Mammary epithelial cell (primary cell): ENCODE measurements at regions of chr21 and their contacts with region 1.

Region 1: DNA sequence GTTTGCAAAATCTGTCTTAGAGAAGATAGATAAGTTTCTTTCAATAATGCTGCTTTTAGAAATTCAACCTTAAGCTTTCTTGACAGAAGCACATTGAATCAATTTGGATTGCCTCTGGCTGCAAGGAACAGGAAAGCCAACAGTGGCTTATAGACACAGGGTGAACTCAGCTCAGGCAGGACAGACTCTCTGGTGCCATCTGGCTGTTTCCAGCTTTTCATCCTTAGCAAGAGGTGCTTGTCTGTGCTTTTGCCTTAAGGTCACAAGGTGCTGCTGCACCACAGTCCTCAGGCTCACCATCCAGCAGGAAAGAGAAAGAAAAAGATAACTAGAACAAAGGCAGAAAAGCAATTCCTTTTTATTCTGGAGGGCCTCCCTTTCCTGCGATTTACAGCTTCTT is 93.7 kb upstream of the ETS2 start:
- DNase-seq: peak; percentile 44
- H3K4me3 ChIP-seq: no peak overlapping the region
- H3K27ac ChIP-seq: no peak overlapping the region
- H3K4me1 ChIP-seq: no peaks in the 10 kb centered on the region
- H3K27me3 ChIP-seq: peaks cover 4% of the 10 kb centered on the region
- CTCF ChIP-seq: peak; percentile 58 to 79

Region 2: DNA sequence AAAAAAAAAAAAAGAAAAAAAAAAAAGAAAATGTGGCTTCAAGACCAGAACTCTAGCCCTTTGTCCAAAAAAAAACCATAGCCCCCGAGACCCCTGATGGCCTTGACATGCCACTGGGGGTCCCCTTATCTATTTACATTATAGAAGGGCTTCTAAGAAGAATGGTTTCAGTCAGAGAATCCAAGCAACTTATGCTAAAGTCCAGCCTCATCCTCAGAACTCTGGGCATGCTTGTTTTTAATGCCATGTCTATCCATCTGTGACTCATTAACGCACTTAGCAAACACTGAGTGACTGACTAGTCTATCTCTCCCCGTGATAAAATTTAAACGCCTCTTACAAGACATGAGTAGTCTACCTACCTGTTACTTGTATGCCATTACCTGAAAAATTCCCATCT is 243.1 kb before region 1 on chr21:
- CTCF ChIA-PET with region 1: no interaction called
- dilution Hi-C with region 1: no loop called
- in situ Hi-C with region 1: no loop called
- intact Hi-C with region 1: loop called (anchors 1 kb)
- DNase-seq: peak; percentile 32
- H3K4me3 ChIP-seq: no peak overlapping the region
- H3K27ac ChIP-seq: no peak overlapping the region
- H3K4me1 ChIP-seq: peaks cover 17% of the 10 kb centered on the region
- H3K27me3 ChIP-seq: no peaks in the 10 kb centered on the region
- CTCF ChIP-seq: no peak

Region 3: DNA sequence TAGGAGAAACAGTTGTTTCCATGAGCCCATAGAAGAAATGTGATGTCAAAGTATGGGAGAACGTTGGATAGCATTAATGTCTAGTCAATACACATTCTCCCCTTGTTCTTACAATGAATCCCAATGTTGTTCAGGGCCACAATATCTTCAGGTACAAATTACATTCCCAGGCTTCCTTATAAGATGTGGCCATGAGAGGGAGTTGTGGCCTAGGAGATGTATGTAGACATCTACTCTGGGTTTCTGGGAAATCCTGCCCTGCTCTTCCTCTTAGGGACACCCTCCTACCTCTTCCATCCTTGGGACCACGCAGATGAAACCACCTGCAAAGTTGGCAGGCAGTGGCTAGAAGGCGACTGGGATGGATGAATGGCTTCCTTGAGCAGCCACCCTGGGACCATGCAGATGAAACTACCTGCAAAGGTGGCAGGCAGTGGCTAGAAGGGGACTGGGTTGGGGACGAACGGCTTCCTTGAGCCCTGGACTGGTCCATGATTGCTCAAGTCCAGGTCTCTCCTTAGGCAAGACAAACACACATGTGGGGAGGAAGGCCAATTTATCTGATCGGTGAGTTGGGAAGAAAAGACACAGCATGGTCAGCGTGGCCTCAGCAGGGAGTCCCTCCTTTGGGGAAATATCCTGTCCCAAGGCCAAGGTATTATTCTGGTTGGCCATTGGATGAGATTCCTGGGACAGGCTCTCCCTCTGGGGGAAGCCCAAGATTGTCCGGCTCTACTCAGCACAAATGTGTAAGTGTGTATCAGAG is 97.7 kb before region 1 on chr21:
- CTCF ChIA-PET with region 1: no interaction called
- dilution Hi-C with region 1: no loop called
- in situ Hi-C with region 1: no loop called
- intact Hi-C with region 1: loop called (anchors 5 kb)
- DNase-seq: no peak
- H3K4me3 ChIP-seq: no peak overlapping the region
- H3K27ac ChIP-seq: no peak overlapping the region
- H3K4me1 ChIP-seq: no peaks in the 10 kb centered on the region
- H3K27me3 ChIP-seq: no peaks in the 10 kb centered on the region
- CTCF ChIP-seq: peak in 1 of 2 donors; percentile 17

Region 4: DNA sequence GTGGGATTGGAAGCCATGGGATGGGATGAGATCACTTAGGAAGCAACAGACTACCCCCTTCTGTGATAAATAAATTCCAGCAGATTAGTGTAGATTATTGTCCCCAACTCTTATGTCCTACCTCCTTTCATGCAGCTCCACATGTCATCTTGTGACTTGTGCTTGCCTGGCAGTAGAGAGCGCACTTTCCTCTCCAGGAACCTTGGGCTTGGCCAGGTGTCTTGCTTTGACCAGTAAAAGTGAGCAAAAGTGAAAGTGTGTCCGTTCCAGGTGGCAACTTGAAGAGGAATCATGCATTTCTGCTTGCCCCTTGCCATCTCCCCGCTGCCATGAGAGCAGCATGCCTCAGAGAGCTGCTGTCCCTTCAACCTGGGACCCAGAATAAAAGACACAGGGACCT is 90.9 kb before region 1 on chr21:
- CTCF ChIA-PET with region 1: interaction called, 19 read pairs
- dilution Hi-C with region 1: no loop called
- in situ Hi-C with region 1: no loop called
- intact Hi-C with region 1: no loop called
- DNase-seq: no peak
- H3K4me3 ChIP-seq: no peak overlapping the region
- H3K27ac ChIP-seq: no peak overlapping the region
- H3K4me1 ChIP-seq: peaks cover 4% of the 10 kb centered on the region
- H3K27me3 ChIP-seq: no peaks in the 10 kb centered on the region
- CTCF ChIP-seq: peak in 1 of 2 donors; percentile 20

Region 5: DNA sequence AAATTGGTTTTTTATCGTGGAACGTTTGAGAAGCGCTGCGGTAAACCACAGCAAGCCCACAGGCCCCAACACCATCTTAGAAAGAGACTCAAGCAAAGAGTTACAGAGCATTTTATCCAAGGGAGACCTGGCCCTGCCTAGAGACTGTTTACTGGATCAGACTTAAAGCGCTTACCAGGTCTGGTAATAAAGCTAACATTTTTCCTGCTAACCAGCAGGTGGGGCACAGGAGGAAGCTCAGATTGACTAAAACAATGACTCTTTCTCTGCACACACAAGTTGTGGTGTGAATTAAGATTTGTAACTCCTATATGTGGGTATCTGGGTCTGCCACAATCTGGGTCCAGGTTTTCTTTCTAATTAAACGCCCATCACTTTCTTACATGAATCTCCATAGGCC is 42.9 kb before region 1 on chr21:
- CTCF ChIA-PET with region 1: interaction called, 10 read pairs
- dilution Hi-C with region 1: no loop called
- in situ Hi-C with region 1: no loop called
- intact Hi-C with region 1: loop called (anchors 1 kb)
- DNase-seq: peak; percentile 20
- H3K4me3 ChIP-seq: no peak overlapping the region
- H3K27ac ChIP-seq: no peak overlapping the region
- H3K4me1 ChIP-seq: no peaks in the 10 kb centered on the region
- H3K27me3 ChIP-seq: no peaks in the 10 kb centered on the region
- CTCF ChIP-seq: peak; percentile 54 to 71

Region 6: DNA sequence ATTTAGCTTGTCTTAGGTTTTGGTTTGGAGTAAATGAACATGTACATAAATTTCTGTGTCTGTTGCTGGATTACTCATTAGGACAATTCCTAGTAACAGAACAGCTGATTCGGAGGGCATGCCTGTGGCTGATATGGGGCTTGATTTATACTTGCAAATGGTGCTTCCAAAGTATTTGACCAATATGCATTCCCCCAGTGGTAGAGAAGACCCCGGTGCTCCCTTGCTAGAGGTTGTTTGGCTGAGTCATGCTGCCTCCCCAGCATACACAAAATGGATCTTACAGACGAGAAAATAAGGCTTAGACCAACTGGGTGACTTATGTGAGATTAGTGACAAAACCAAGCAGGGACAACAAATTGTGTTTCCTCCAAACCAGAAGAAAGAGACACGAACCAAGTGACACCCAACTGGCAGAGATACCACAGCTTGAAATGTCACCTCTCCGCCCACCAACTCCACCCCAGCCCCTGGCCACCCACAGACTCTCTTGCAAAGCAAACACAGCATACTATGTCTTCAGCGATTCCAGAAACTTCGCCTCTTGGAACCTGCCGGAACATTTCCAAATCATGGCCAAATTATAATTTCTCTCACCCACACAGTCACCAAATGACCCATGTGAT is 17.8 kb after region 1 on chr21:
- CTCF ChIA-PET with region 1: no interaction called
- dilution Hi-C with region 1: no loop called
- in situ Hi-C with region 1: no loop called
- intact Hi-C with region 1: no loop called
- DNase-seq: no peak
- H3K4me3 ChIP-seq: no peak overlapping the region
- H3K27ac ChIP-seq: no peak overlapping the region
- H3K4me1 ChIP-seq: peaks cover 15% of the 10 kb centered on the region
- H3K27me3 ChIP-seq: no peaks in the 10 kb centered on the region
- CTCF ChIP-seq: no peak